HCT116 (cell line): ENCODE measurements at regions of chr9 and their contacts with region 1.

Region 1: DNA sequence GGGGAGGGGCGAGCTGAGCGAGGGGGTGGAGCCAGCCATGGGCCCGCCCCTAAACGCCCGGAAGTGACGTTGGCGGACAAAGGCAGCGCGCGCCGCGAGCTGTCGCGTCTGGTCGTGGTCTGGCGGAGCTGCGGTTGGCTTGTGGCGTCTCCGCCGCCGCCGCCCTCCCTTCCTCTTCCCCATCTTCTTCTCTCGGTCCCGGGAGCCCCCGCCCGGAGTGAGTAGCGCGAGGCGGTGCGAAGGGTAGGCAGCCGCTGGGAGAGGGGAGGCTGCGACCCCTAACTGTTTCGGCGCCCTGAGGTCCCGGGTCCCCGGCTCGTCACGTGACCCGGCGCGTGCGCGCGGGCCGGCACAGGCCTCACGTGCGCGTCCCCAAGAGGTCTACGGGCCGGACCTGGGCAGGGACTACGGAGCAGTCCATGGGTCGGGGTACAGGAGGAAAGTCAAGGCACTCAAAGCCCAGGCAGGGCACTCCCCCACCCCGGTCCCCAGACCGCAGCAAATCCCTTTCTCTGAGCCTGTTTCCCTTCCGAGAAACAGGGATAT is at the start of gene NTMT1:
- DNase-seq: peak; percentile 63
- ATAC-seq: peak; percentile 84
- H3K4me3 ChIP-seq: peak within 1 kb of the TSS; percentile 88 to 99
- H3K27ac ChIP-seq: peak within 1 kb of the TSS; percentile 86
- H3K4me1 ChIP-seq: peaks cover 11 to 43% of the 10 kb centered on the region in 2 experiments
- H3K27me3 ChIP-seq: no peaks in the 10 kb centered on the region
- CTCF ChIP-seq: no peak
- POLR2A ChIP-seq: peak; percentile 67
- RAD21 ChIP-seq: no peak
- total RNA-seq, gene NTMT1: 84.8 TPM

Region 2: GRCh38 chr9:129131300-129132145 is 494.6 kb before region 1 on chr9:
- CTCF ChIA-PET with region 1: interaction called, 91 read pairs
- POLR2A ChIA-PET with region 1: interaction called, 8 read pairs
- RAD21 ChIA-PET with region 1: interaction called, 4 to 5 read pairs
- intact Hi-C with region 1: loop called (anchors 1 kb)
- DNase-seq: peak; percentile 38
- ATAC-seq: peak; percentile 96
- H3K4me3 ChIP-seq: no peak overlapping the region
- H3K27ac ChIP-seq: peak overlapping the region; percentile 32; the same call in 1 of the 2 replicates
- H3K4me1 ChIP-seq: peaks cover 8 to 20% of the 10 kb centered on the region in 2 experiments
- H3K27me3 ChIP-seq: no peaks in the 10 kb centered on the region
- CTCF ChIP-seq: peak in 2 of 3 experiments; percentile 98 to 99; a peak in 4 of 6 replicates
- POLR2A ChIP-seq: no peak
- RAD21 ChIP-seq: no peak

Region 3: GRCh38 chr9:129320575-129321263 is 305.4 kb before region 1 on chr9:
- CTCF ChIA-PET with region 1: no interaction called
- POLR2A ChIA-PET with region 1: no interaction called
- RAD21 ChIA-PET with region 1: no interaction called
- intact Hi-C with region 1: no loop called
- DNase-seq: no peak
- ATAC-seq: no peak
- H3K4me3 ChIP-seq: no peak overlapping the region
- H3K27ac ChIP-seq: no peak overlapping the region
- H3K4me1 ChIP-seq: peaks cover 0 to 27% of the 10 kb centered on the region in 2 experiments; a peak in 3 of 4 replicates
- H3K27me3 ChIP-seq: no peaks in the 10 kb centered on the region
- CTCF ChIP-seq: no peak
- POLR2A ChIP-seq: no peak
- RAD21 ChIP-seq: no peak

Region 4: DNA sequence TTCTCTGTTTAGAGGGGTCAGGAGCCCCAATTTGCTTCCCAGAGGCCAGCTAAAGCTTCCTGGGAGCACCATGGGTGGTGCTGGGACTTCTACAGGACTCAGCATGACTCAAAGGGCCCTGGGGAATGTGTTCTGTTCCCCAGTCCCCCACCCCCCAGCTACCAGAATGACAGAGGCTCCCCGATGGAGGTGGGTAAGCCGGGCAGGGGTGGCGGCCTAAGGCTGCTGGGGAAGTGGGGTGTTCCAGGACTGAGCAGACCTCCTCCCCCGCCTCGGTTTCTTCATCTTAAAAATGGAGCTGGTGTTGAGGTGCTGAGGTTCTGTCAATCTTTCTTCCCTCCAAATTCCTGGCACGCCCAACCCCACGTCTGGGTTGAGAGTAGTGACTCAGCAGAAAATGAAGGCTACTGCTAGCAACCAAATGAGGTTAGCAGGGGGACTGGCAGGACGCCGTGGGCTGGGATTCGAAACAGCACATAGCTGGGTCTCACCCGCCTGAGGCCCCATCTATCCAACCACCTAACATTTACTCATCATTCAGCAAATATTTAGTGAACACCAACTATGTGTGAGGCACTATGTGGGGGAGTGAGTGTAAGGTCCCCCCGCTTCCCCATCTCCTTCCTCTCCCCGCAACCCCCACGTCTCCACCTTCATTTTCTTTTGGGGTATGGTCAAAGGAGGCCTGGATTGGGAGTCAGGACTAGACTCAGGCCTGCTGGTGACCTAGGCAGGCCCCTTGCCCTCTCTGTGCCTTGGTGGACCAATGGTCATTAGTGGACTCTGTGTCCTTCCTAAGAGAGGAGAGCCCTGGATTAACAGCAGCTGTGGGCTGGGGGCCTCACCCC is 55.5 kb before region 1 on chr9:
- CTCF ChIA-PET with region 1: no interaction called
- POLR2A ChIA-PET with region 1: no interaction called
- RAD21 ChIA-PET with region 1: no interaction called
- intact Hi-C with region 1: no loop called
- DNase-seq: peak; percentile 70
- ATAC-seq: peak; percentile 18
- H3K4me3 ChIP-seq: peak overlapping the region; percentile 34 to 72; a peak in 3 of 4 replicates
- H3K27ac ChIP-seq: peak overlapping the region; percentile 100
- H3K4me1 ChIP-seq: peaks cover 41 to 66% of the 10 kb centered on the region in 2 experiments
- H3K27me3 ChIP-seq: no peaks in the 10 kb centered on the region
- CTCF ChIP-seq: no peak
- POLR2A ChIP-seq: no peak
- RAD21 ChIP-seq: no peak

Region 5: DNA sequence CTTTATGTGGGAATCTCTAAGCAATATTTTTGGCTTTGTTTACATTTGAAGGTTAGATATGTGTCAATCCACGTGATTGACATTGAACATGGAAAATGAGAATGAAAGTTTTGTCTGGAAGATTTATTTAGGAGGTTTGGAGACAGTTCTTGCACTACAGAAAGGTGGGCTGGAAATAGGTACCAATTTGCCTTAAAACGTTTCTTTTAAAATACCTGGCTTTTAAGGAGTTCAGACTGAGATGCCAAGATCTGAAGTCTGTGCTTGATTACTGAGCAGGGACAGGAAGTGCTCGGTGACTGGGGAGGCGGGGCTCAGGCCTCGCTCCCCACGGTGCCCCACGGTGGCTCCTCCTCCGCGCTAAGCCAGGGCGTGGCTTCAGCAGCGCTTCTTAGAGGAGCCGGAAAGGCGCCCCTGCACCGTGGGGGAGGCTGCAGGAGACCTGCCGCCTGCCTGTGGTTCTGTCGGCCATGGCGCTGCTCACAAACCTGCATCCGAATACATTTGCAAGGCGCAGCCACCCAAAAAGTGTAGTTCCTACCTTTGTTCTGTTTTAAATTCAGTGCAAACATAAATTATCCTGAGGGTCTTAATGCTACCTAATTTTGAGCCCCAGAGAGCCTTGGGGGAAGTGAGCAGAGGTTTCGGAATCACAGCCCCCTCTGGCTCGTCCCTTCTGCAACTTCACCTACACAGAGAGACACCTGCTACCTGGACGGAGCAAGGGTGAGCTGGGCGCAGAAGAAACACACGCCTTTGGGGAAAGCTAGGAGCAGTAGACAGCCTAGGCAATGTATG is 258.3 kb after region 1 on chr9:
- CTCF ChIA-PET with region 1: no interaction called
- POLR2A ChIA-PET with region 1: no interaction called
- RAD21 ChIA-PET with region 1: no interaction called
- intact Hi-C with region 1: no loop called
- DNase-seq: peak; percentile 64
- ATAC-seq: peak; percentile 88
- H3K4me3 ChIP-seq: peak overlapping the region; percentile 33 to 50
- H3K27ac ChIP-seq: peak overlapping the region; percentile 70
- H3K4me1 ChIP-seq: peaks cover 22 to 31% of the 10 kb centered on the region in 2 experiments
- H3K27me3 ChIP-seq: no peaks in the 10 kb centered on the region
- CTCF ChIP-seq: no peak
- POLR2A ChIP-seq: peak; percentile 61
- RAD21 ChIP-seq: no peak